CD4-positive, alpha-beta T cell (primary cell): ENCODE measurements at regions of chr6 and their contacts with region 1.

Region 1: GRCh38 chr6:30326526-30327260 is at the start of gene TRIM39:
- DNase-seq: peak; percentile 73 to 97 (median 87)
- ATAC-seq: peak; percentile 59
- H3K4me3 ChIP-seq: peak within 1 kb of the TSS; percentile 83
- H3K4me3 Mint-ChIP-seq: peak within 1 kb of the TSS; percentile 97
- H3K27ac ChIP-seq: peak within 1 kb of the TSS; percentile 98 to 99
- H3K27ac Mint-ChIP-seq: peak within 1 kb of the TSS; percentile 97
- H3K4me1 ChIP-seq: peaks cover 52% of the 10 kb centered on the region
- H3K4me1 Mint-ChIP-seq: peaks cover 68% of the 10 kb centered on the region
- H3K27me3 ChIP-seq: no peaks in the 10 kb centered on the region
- H3K27me3 Mint-ChIP-seq: no peaks in the 10 kb centered on the region
- CTCF ChIP-seq: no peak
- total RNA-seq, gene TRIM39: 38.2 to 38.3 TPM

Region 2: DNA sequence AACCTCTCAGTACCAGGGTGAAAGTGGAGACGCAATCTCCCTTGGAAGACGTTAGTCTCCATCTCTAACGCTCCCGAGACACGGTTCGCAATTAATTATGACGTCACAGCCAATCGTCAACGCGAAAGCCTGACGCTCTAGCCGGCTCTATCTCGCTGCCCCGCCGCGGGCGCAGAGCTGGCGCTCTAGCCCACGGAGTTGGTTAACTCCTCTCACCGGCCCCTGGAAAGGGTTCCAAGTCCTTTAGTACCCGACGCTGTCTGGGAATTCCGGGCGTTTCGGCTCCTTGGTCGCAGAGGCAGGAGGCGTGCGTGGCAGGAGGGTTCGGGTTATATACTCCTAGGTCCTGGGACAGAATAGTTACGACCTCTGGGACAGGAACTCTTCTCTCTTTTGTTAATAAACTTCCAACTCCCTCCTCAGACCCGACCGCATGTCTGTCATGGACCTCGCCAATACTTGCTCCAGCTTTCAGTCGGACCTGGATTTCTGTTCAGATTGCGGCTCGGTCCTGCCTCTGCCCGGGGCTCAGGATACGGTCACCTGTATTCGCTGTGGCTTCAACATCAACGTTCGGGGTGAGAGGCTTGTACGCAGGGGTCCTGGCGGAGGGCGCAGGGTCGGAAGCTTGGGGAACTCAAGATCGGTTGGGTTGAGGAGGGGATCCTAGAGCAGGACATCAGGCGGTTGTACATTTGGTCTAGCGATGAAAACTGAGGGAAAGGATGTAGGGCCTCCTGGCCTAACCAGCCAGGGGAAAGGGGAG is 265.4 kb before region 1 on chr6 and contains the start of gene POLR1H:
- CTCF ChIA-PET with region 1: no interaction called
- POLR2A ChIA-PET with region 1: interaction called, 14 read pairs
- intact Hi-C with region 1: loop called (anchors 2 to 5 kb)
- DNase-seq: peak; percentile 72 to 96 (median 84)
- ATAC-seq: peak; percentile 86
- H3K4me3 ChIP-seq: peak within 1 kb of the TSS; percentile 89
- H3K4me3 Mint-ChIP-seq: peak within 1 kb of the TSS; percentile 95
- H3K27ac ChIP-seq: peak within 1 kb of the TSS; percentile 89 to 94
- H3K27ac Mint-ChIP-seq: peak within 1 kb of the TSS; percentile 97
- H3K4me1 ChIP-seq: peaks cover 29% of the 10 kb centered on the region
- H3K4me1 Mint-ChIP-seq: peaks cover 46% of the 10 kb centered on the region
- H3K27me3 ChIP-seq: no peaks in the 10 kb centered on the region
- H3K27me3 Mint-ChIP-seq: no peaks in the 10 kb centered on the region
- CTCF ChIP-seq: no peak
- total RNA-seq, gene POLR1H: 36.5 to 39.4 TPM

Region 3: DNA sequence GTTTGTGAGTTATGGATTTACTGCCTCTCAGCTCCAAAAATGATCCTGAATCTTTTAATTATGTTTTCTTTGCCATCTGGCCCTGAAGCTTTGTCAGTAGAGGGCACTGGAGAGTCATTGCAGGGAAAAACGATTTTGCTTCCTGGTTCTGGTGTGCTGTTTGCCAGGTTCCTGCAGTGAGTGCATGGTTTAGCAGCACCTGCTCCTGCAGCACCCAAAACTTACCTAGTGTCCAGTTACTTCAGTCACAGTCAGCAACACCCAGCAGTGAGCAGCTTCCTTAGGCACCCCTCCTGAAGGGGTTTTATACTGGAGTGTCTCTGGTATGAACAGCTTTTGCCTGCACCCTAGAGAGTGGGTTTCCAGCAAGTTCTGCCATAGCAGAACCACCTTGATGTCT is 107.4 kb before region 1 on chr6:
- CTCF ChIA-PET with region 1: interaction called, 5 read pairs
- POLR2A ChIA-PET with region 1: interaction called, 61 read pairs
- intact Hi-C with region 1: loop called in 1 of 2 experiments (anchors 5 kb)
- DNase-seq: peak in 13 of 14 experiments; percentile 29 to 78 (median 38)
- ATAC-seq: peak; percentile 73
- H3K4me3 ChIP-seq: no peak overlapping the region
- H3K4me3 Mint-ChIP-seq: no peak overlapping the region
- H3K27ac ChIP-seq: no peak overlapping the region
- H3K27ac Mint-ChIP-seq: peak overlapping the region; percentile 18
- H3K4me1 ChIP-seq: peaks cover 8% of the 10 kb centered on the region
- H3K4me1 Mint-ChIP-seq: peaks cover 18% of the 10 kb centered on the region
- H3K27me3 ChIP-seq: no peaks in the 10 kb centered on the region
- H3K27me3 Mint-ChIP-seq: no peaks in the 10 kb centered on the region
- CTCF ChIP-seq: peak; percentile 91

Region 4: DNA sequence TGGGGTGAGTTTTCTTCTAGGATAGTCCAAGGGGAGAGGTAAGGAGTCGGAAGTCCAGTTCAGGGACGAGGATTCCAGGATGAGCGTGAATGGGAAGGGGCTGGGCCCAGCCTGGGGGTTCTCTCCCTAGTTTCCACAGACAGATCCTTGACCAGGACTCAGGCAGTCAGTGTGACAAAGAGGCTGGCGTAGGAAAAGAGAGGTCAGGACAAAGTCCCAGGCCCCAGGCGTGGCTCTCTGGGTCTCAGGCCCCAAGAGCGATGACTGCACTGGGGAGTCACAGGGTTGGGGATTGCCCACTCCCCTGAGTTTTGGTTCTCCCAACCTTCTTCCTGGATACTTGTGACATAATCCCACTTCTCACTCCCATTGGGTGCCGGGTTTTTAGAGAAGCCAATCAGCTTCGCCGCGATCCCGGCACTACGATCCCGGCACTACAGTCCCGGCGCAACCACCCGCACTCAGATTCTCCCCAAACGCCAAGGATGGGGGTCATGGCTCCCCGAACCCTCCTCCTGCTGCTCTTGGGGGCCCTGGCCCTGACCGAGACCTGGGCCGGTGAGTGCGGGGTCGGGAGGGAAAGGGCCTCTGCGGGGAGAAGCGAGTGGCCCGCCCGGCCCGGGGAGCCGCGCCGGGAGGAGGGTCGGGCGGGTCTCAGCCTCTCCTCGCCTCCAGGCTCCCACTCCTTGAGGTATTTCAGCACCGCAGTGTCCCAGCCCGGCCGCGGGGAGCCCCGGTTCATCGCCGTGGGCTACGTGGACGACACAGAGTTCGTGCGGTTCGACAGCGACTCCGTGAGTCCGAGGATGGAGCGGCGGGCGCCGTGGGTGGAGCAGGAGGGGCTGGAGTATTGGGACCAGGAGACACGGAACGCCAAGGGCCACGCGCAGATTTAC is 67.3 kb before region 1 on chr6:
- CTCF ChIA-PET with region 1: no interaction called
- POLR2A ChIA-PET with region 1: interaction called, 7 read pairs
- intact Hi-C with region 1: loop called (anchors 5 kb)
- DNase-seq: peak; percentile 36 to 92 (median 50)
- ATAC-seq: peak; percentile 81
- H3K4me3 ChIP-seq: peak overlapping the region; percentile 84
- H3K4me3 Mint-ChIP-seq: peak overlapping the region; percentile 96
- H3K27ac ChIP-seq: peak overlapping the region; percentile 41
- H3K27ac Mint-ChIP-seq: peak overlapping the region; percentile 85
- H3K4me1 ChIP-seq: peaks cover 16% of the 10 kb centered on the region
- H3K4me1 Mint-ChIP-seq: peaks cover 9% of the 10 kb centered on the region
- H3K27me3 ChIP-seq: no peaks in the 10 kb centered on the region
- H3K27me3 Mint-ChIP-seq: no peaks in the 10 kb centered on the region
- CTCF ChIP-seq: peak; percentile 38

Region 5: GRCh38 chr6:30344868-30345671 is 18.4 kb after region 1 on chr6 and contains the start of gene RPP21:
- CTCF ChIA-PET with region 1: no interaction called
- POLR2A ChIA-PET with region 1: interaction called, 15 read pairs
- intact Hi-C with region 1: loop called (anchors 1 kb)
- DNase-seq: peak; percentile 74 to 92 (median 85)
- ATAC-seq: peak; percentile 99
- H3K4me3 ChIP-seq: peak within 1 kb of the TSS; percentile 91
- H3K4me3 Mint-ChIP-seq: peak within 1 kb of the TSS; percentile 96
- H3K27ac ChIP-seq: peak within 1 kb of the TSS; percentile 88 to 90
- H3K27ac Mint-ChIP-seq: peak within 1 kb of the TSS; percentile 90
- H3K4me1 ChIP-seq: peaks cover 22% of the 10 kb centered on the region
- H3K4me1 Mint-ChIP-seq: peaks cover 26% of the 10 kb centered on the region
- H3K27me3 ChIP-seq: no peaks in the 10 kb centered on the region
- H3K27me3 Mint-ChIP-seq: no peaks in the 10 kb centered on the region
- CTCF ChIP-seq: no peak
- total RNA-seq, gene RPP21: 42.8 to 51.9 TPM